ENCODE measurements at regions of chrX and their contacts with region 1.

Region 1: DNA sequence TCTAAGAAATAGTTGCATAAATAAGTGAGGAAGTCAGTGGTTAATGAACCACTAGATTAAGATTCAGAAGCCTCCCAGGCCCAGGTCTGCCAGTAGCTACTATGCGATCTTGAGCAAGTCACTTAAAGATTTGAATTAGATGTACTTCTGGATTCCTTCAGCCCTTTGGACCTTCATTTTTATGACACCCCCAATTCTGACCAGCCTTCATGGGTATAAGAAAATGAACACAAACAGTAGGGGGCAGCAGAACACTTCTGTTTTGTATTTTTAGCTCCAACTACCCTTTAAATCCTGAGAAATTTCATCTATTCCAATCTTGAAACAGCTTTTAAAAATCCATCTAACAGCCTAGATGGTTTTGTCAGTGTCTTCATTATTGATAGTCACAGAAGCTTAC is 19.0 kb downstream of the TMEM47 start:
- DNase-seq: no peak
- ATAC-seq: no peak
- H3K4me3 ChIP-seq: no peak overlapping the region
- H3K27ac ChIP-seq: no peak overlapping the region
- H3K4me1 ChIP-seq: peaks cover 0 to 32% (median 0%) of the 10 kb centered on the region in 12 donors
- H3K27me3 ChIP-seq: no peaks in the 10 kb centered on the region
- CTCF ChIP-seq: peak; percentile 34 to 61 (median 44)
- POLR2A ChIP-seq: no peak

Region 2: GRCh38 chrX:34893741-34894140 is 255.6 kb after region 1 on chrX:
- intact Hi-C with region 1: loop called in 1 of 10 experiments (anchors 5 kb)
- DNase-seq: no peak
- ATAC-seq: no peak
- H3K4me3 ChIP-seq: no peak overlapping the region
- H3K27ac ChIP-seq: no peak overlapping the region
- H3K4me1 ChIP-seq: no peaks in the 10 kb centered on the region
- H3K27me3 ChIP-seq: no peaks in the 10 kb centered on the region
- CTCF ChIP-seq: peak in 7 of 12 donors; percentile 19 to 44 (median 34)
- POLR2A ChIP-seq: no peak